ENCODE measurements at regions of chr6 and their contacts with region 1.

Region 1: GRCh38 chr6:39114704-39115599 is at the start of gene SAYSD1:
- DNase-seq: peak; percentile 85 to 94 (median 92)
- ATAC-seq: peak; percentile 93
- H3K4me3 ChIP-seq: peak within 1 kb of the TSS; percentile 74
- H3K4me3 Mint-ChIP-seq: peak within 1 kb of the TSS; percentile 82 to 100 (median 96)
- H3K27ac ChIP-seq: peak within 1 kb of the TSS; percentile 86
- H3K27ac Mint-ChIP-seq: peak within 1 kb of the TSS; percentile 92 to 99 (median 97)
- H3K4me1 ChIP-seq: peaks cover 21 to 43% of the 10 kb centered on the region in 2 donors
- H3K4me1 Mint-ChIP-seq: peaks cover 25 to 67% (median 62%) of the 10 kb centered on the region in 7 donors
- H3K27me3 ChIP-seq: no peaks in the 10 kb centered on the region
- H3K27me3 Mint-ChIP-seq: no peaks in the 10 kb centered on the region
- total RNA-seq, gene SAYSD1: 15.1 to 26.8 (median 19.8) TPM

Region 2: GRCh38 chr6:38570750-38571149 is 544.2 kb before region 1 on chr6:
- CTCF ChIA-PET with region 1: no interaction called
- POLR2A ChIA-PET with region 1: no interaction called
- intact Hi-C with region 1: loop called (anchors 1 to 5 kb)
- DNase-seq: peak in 4 of 9 donors; percentile 7 to 20 (median 10)
- ATAC-seq: no peak
- H3K4me3 ChIP-seq: no peak overlapping the region
- H3K4me3 Mint-ChIP-seq: peak overlapping the region in 3 of 10 donors; percentile 9 to 77 (median 26)
- H3K27ac ChIP-seq: no peak overlapping the region
- H3K27ac Mint-ChIP-seq: peak overlapping the region in 6 of 9 donors; percentile 68 to 95 (median 89)
- H3K4me1 ChIP-seq: peaks cover 7 to 8% of the 10 kb centered on the region in 2 donors
- H3K4me1 Mint-ChIP-seq: peaks cover 19 to 32% (median 24%) of the 10 kb centered on the region in 7 donors
- H3K27me3 ChIP-seq: no peaks in the 10 kb centered on the region
- H3K27me3 Mint-ChIP-seq: peaks cover 0 to 2% (median 0%) of the 10 kb centered on the region in 5 donors

Region 3: GRCh38 chr6:38702558-38703397 is 412.2 kb before region 1 on chr6 and contains the start of gene GLO1:
- CTCF ChIA-PET with region 1: no interaction called
- POLR2A ChIA-PET with region 1: interaction called, 4 read pairs
- intact Hi-C with region 1: loop called in 1 of 2 experiments (anchors 2 kb)
- DNase-seq: peak; percentile 84 to 96 (median 94)
- ATAC-seq: peak; percentile 100
- H3K4me3 ChIP-seq: peak within 1 kb of the TSS; percentile 81
- H3K4me3 Mint-ChIP-seq: peak within 1 kb of the TSS; percentile 77 to 99 (median 90)
- H3K27ac ChIP-seq: peak within 1 kb of the TSS; percentile 81
- H3K27ac Mint-ChIP-seq: peak within 1 kb of the TSS; percentile 76 to 95 (median 91)
- H3K4me1 ChIP-seq: peaks cover 0 to 4% of the 10 kb centered on the region in 2 donors
- H3K4me1 Mint-ChIP-seq: peaks cover 8 to 50% (median 28%) of the 10 kb centered on the region in 7 donors
- H3K27me3 ChIP-seq: no peaks in the 10 kb centered on the region
- H3K27me3 Mint-ChIP-seq: peaks cover 13 to 18% (median 16%) of the 10 kb centered on the region in 5 donors
- total RNA-seq, gene GLO1: 16.0 to 103 (median 22.3) TPM

Region 4: GRCh38 chr6:39088331-39088730 is 26.6 kb before region 1 on chr6:
- CTCF ChIA-PET with region 1: no interaction called
- POLR2A ChIA-PET with region 1: no interaction called
- intact Hi-C with region 1: no loop called
- DNase-seq: peak in 3 of 9 donors; percentile 6 to 15 (median 8)
- ATAC-seq: peak; percentile 54
- H3K4me3 ChIP-seq: no peak overlapping the region
- H3K4me3 Mint-ChIP-seq: no peak overlapping the region
- H3K27ac ChIP-seq: no peak overlapping the region
- H3K27ac Mint-ChIP-seq: peak overlapping the region in 1 of 9 donors; percentile 17
- H3K4me1 ChIP-seq: no peaks in the 10 kb centered on the region
- H3K4me1 Mint-ChIP-seq: peaks cover 0 to 17% (median 4%) of the 10 kb centered on the region in 7 donors
- H3K27me3 ChIP-seq: no peaks in the 10 kb centered on the region
- H3K27me3 Mint-ChIP-seq: peaks cover 23 to 69% (median 49%) of the 10 kb centered on the region in 5 donors

Region 5: DNA sequence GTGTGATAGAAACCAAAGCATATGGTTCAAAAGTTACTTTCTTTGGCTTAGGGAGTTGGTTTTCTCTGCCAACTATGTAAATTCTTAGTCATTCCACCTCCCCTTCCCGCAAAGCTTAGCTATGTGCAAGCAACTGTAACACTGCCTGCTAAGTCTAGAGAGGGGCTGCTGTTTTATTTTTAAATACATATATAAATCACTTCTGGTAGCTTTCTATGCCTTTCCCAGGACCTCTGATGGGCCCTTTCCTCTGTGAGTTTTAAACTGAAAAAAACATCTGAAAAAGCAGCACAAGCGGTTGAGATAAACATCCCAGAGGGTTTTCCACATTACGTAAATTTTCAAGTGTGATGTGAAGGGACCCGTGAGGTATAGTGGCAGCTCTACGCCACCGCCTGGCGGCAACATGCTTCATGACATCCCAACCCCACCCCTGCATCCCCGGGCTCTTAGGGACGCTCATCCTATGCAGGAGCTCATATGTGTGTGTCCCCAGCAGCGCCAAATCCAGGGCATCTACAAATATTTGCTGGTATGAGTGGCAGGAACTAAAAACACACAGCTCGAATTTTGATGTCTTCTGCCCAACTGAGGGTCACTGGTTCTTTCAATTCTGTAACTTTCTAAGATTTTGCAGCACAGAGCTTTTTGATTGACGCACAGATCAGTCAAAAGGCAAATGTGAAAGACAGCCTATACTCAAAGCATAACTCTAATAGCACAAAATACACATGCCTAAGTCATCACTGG is 12.7 kb before region 1 on chr6:
- CTCF ChIA-PET with region 1: no interaction called
- POLR2A ChIA-PET with region 1: interaction called, 8 read pairs
- intact Hi-C with region 1: loop called in 1 of 2 experiments (anchors 1 kb)
- DNase-seq: peak in 1 of 9 donors; percentile 20
- ATAC-seq: peak; percentile 62
- H3K4me3 ChIP-seq: no peak overlapping the region
- H3K4me3 Mint-ChIP-seq: no peak overlapping the region
- H3K27ac ChIP-seq: no peak overlapping the region
- H3K27ac Mint-ChIP-seq: peak overlapping the region in 1 of 9 donors; percentile 15
- H3K4me1 ChIP-seq: peaks cover 0 to 5% of the 10 kb centered on the region in 2 donors
- H3K4me1 Mint-ChIP-seq: peaks cover 12 to 35% (median 16%) of the 10 kb centered on the region in 7 donors
- H3K27me3 ChIP-seq: no peaks in the 10 kb centered on the region
- H3K27me3 Mint-ChIP-seq: peaks cover 0 to 10% (median 0%) of the 10 kb centered on the region in 5 donors

Region 6: DNA sequence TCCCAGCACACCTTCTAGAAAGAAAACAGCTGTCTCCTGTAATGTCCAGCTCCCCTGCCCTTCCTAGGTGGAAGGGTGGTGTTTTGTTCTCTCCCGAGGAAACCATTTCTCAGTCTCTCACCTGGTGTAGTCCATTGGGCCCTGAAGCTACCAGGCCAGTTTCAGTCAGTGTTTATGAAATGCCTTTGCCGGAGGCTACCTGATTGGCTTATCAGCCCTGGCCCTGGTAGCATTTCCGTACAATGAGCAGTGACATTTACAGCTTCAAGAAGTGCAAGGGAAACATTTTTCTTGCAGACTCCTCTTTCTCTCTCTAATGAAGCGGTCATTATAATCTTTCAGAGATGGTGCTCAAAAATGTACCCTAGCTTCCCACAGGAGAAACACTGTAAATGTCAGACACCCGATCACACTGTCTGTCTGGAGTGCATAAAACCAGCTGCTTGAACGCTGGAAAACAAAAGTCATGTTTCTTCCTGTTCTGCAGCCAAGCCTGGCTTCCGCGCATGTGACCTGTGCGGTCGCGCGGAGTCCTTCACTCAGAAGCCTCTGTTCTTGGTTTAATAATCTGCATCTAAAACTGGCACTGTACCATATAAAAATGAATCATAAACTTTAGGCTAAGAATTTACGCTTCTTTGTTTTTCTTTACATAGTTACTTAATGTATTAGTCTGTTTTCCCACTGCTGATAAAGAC is 28.4 kb after region 1 on chr6:
- CTCF ChIA-PET with region 1: no interaction called
- POLR2A ChIA-PET with region 1: no interaction called
- intact Hi-C with region 1: no loop called
- DNase-seq: peak in 2 of 9 donors; percentile 27 to 28
- ATAC-seq: no peak
- H3K4me3 ChIP-seq: no peak overlapping the region
- H3K4me3 Mint-ChIP-seq: peak overlapping the region in 2 of 10 donors; percentile 26 to 55
- H3K27ac ChIP-seq: no peak overlapping the region
- H3K27ac Mint-ChIP-seq: peak overlapping the region in 3 of 9 donors; percentile 82 to 96 (median 86)
- H3K4me1 ChIP-seq: no peaks in the 10 kb centered on the region
- H3K4me1 Mint-ChIP-seq: peaks cover 0 to 10% (median 0%) of the 10 kb centered on the region in 7 donors
- H3K27me3 ChIP-seq: no peaks in the 10 kb centered on the region
- H3K27me3 Mint-ChIP-seq: peaks cover 10 to 27% (median 17%) of the 10 kb centered on the region in 5 donors

Region 7: GRCh38 chr6:39166189-39166911 is 51.4 kb after region 1 on chr6:
- CTCF ChIA-PET with region 1: no interaction called
- POLR2A ChIA-PET with region 1: no interaction called
- intact Hi-C with region 1: loop called in 1 of 2 experiments (anchors 1 kb)
- DNase-seq: peak; percentile 26 to 86 (median 66)
- ATAC-seq: peak; percentile 86
- H3K4me3 ChIP-seq: no peak overlapping the region
- H3K4me3 Mint-ChIP-seq: peak overlapping the region in 2 of 10 donors; percentile 34 to 44
- H3K27ac ChIP-seq: no peak overlapping the region
- H3K27ac Mint-ChIP-seq: no peak overlapping the region
- H3K4me1 ChIP-seq: peaks cover 0 to 3% of the 10 kb centered on the region in 2 donors
- H3K4me1 Mint-ChIP-seq: peaks cover 0 to 8% (median 5%) of the 10 kb centered on the region in 7 donors
- H3K27me3 ChIP-seq: no peaks in the 10 kb centered on the region
- H3K27me3 Mint-ChIP-seq: peaks cover 0 to 7% (median 4%) of the 10 kb centered on the region in 5 donors

Region 8: GRCh38 chr6:39322306-39322850 is 207.4 kb after region 1 on chr6 and contains the start of gene KCNK16:
- CTCF ChIA-PET with region 1: no interaction called
- POLR2A ChIA-PET with region 1: no interaction called
- intact Hi-C with region 1: no loop called
- DNase-seq: no peak
- ATAC-seq: no peak
- H3K4me3 ChIP-seq: no peak within 1 kb of the TSS
- H3K4me3 Mint-ChIP-seq: no peak within 1 kb of the TSS
- H3K27ac ChIP-seq: no peak within 1 kb of the TSS
- H3K27ac Mint-ChIP-seq: no peak within 1 kb of the TSS
- H3K4me1 ChIP-seq: no peaks in the 10 kb centered on the region
- H3K4me1 Mint-ChIP-seq: peaks cover 0 to 5% (median 0%) of the 10 kb centered on the region in 7 donors
- H3K27me3 ChIP-seq: no peaks in the 10 kb centered on the region
- H3K27me3 Mint-ChIP-seq: peaks cover 0 to 26% (median 15%) of the 10 kb centered on the region in 5 donors
- total RNA-seq, gene KCNK16: not detected

Region 9: DNA sequence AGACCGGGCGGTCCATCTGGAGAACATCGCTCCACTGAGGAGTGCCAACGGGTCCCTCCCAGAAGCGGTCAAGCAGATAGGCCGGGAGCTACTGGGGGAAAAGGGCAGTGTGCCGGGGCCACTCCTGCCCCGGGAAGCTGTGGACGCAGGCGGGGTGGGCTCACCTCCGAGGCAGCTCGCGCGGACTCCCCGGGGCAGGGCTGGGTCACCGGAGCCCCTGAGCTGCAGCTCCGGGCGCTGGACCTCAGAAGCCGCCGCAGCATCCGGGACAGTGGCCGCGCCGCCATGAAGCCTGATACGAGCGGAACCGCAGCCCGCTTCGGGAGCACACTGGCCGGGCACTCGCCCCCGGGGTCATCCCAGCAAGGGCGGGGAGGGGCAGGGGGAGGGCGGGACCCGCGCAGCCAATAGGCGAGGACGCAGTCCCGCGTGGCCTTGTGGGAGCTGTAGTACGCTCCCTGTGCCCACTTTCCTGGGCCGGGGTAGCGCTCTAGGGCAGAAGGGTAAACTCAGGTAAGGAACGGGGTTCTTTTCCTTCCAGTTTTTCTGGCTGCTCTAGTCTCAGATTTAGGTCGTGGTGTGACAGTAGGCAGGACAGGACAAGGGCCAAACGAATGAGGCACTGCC is 819.3 kb after region 1 on chr6 and contains the start of gene MOCS1:
- CTCF ChIA-PET with region 1: no interaction called
- POLR2A ChIA-PET with region 1: no interaction called
- intact Hi-C with region 1: loop called in 1 of 2 experiments (anchors 10 kb)
- DNase-seq: peak in 7 of 9 donors; percentile 15 to 30 (median 22)
- ATAC-seq: peak; percentile 77
- H3K4me3 ChIP-seq: peak within 1 kb of the TSS; percentile 42
- H3K4me3 Mint-ChIP-seq: peak within 1 kb of the TSS; percentile 80 to 95 (median 90)
- H3K27ac ChIP-seq: peak within 1 kb of the TSS; percentile 27
- H3K27ac Mint-ChIP-seq: peak within 1 kb of the TSS in 7 of 9 donors; percentile 66 to 93 (median 78)
- H3K4me1 ChIP-seq: peaks cover 0 to 7% of the 10 kb centered on the region in 2 donors
- H3K4me1 Mint-ChIP-seq: peaks cover 3 to 28% (median 24%) of the 10 kb centered on the region in 7 donors
- H3K27me3 ChIP-seq: no peaks in the 10 kb centered on the region
- H3K27me3 Mint-ChIP-seq: peaks cover 0 to 35% (median 7%) of the 10 kb centered on the region in 5 donors
- total RNA-seq, gene MOCS1: 0.56 to 3.0 (median 1.3) TPM

Measured in naive thymus-derived CD4-positive, alpha-beta T cell (primary cell).